ENCODE measurements at regions of chr10 and their contacts with region 1.

Region 1: GRCh38 chr10:13586676-13587355 is at the start of gene PRPF18:
- DNase-seq: peak; percentile 89
- H3K4me3 Mint-ChIP-seq: peak within 1 kb of the TSS; percentile 100
- H3K27ac Mint-ChIP-seq: peak within 1 kb of the TSS; percentile 97
- H3K4me1 Mint-ChIP-seq: peaks cover 20% of the 10 kb centered on the region
- H3K27me3 Mint-ChIP-seq: peaks cover 6% of the 10 kb centered on the region
- total RNA-seq, gene PRPF18: 20.6 and 22.9 TPM in 2 replicates

Region 2: DNA sequence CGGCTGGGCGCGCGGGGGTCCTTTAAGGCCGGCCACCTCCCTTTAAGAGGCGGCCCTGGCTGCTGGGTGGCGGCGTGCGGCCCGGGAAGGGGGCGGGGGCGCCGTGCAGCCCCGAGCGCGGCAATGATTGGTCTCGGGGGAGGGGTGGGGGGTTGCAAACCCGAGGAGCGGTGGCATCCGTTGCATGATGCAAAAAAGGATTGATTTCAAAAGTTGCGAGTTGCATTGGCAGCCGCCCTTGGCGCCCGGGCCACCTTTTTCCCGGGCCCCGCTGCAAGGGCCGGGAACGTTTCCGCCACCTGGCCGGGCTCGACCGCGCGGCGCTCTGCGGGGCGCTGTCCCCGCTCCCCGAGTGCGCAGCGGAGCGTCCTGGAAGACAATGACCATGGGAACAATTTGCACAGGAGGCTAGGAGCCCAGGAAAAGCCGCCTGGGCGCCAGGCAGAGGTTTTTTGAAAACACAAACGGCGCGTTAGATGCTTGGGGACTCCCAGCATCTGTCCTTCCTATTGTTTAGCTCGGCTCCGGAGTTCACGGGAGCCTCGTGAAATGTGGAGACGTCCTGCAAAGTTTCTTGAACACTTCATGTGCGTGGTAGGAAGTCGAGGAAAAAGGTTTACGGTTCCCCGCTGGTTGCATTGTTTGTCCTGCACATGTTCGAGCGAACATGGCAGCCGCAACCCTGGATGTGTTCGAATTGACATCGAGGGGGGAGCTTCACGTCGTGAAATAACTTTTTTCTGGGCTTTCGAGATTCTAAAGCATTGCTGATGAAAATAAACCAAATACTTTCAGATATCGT is 238.4 kb before region 1 on chr10 and contains the start of gene SEPHS1:
- intact Hi-C with region 1: loop called (anchors 2 kb)
- DNase-seq: peak; percentile 79
- H3K4me3 Mint-ChIP-seq: peak within 1 kb of the TSS; percentile 90
- H3K27ac Mint-ChIP-seq: peak within 1 kb of the TSS; percentile 90
- H3K4me1 Mint-ChIP-seq: peaks cover 48% of the 10 kb centered on the region
- H3K27me3 Mint-ChIP-seq: peaks cover 5% of the 10 kb centered on the region
- total RNA-seq, gene SEPHS1: 58.8 and 61.9 TPM in 2 replicates

Region 3: DNA sequence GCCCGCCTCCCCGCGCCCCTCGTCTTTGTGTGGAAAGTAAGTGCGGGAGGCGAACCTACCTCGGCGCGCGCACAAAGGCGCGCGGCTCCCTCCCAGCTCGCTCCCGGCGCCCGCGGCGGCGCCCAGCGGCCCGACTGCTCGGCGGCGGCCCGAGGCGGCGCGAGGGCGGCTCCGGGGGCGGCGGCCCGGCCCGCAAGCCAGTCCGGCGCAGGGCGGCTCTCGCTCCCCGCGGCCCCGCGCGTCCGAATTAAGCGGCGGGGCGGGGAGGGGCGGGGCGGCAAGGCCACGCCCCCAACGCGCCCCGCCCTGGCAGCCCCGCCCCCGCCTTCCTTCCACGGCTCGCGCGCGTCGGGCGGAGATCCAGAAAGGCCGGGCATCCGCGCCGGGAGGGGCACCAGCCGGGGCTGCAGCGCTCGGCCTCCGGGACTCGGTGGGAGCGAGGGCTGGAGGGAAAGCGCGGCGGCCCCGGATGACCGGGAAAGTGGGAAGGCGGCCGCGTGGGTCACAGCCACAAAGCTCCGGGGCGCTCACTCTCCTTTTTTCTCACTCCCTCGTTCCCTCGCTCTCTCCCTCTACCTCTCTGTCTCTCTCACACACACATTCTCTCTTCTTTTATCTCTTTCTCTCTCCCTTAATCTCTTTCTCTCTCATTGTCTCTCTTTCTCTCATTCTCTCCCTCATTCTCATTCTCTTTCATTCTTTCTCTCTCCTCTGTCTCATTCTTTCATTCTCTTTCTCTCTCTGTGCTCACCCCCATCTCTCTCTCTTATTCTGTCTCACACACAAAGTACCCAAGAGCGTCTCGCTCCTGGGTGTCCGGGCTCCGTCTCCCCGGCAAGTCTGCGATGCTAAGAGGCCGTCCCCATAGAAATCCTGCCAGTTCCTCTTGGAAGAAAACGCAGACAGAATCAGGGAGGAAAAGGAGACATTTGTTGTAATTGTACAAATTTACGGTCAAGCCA is 1017.6 kb after region 1 on chr10:
- intact Hi-C with region 1: no loop called
- DNase-seq: peak; percentile 65
- H3K4me3 Mint-ChIP-seq: peak overlapping the region; percentile 97
- H3K27ac Mint-ChIP-seq: peak overlapping the region; percentile 93
- H3K4me1 Mint-ChIP-seq: peaks cover 74% of the 10 kb centered on the region
- H3K27me3 Mint-ChIP-seq: no peaks in the 10 kb centered on the region